ENCODE measurements at regions of chr4 and their contacts with region 1.

Region 1: DNA sequence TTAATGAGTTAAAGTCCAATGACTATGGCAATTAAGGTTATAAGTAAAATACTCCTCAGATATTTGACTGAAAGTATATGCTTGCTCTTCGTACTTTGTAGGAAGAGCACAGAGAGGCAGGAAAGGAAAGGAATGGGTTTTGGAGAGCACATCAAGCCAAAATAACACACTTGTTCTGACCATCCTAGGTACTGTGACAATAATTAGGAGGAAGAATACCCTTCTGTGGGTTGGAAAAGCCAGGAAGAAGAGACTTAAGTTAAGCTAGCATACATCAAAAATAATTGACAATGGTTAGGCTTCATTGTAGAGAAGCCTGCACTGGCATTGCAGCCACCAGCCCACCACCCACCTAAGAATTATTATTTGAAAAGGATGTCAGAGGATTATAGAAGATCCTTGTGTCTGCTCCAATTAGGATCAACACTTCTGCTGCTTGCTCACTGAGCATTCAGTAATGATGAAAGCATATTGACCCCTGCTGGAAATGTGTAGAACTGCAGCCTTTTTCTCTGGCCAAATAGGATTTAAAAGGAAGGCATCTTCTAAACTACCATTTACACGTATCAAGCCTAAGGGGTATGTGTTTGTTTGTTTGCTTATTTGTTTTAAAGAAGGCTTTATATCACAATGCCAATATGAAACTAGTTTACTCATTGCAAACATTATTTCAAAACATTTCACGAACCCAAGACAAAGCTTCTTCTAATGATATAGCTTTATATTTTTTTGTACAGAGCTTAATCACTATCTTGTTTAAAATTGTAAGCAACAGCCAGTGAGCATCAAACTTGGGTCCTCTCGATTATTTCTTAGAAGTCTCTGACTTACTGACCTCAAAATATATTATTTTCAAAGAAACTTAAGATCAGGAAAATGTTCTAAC is 286.2 kb upstream of the TET2 start:
- DNase-seq: peak; percentile 64
- H3K4me3 ChIP-seq: no peak overlapping the region
- H3K27ac ChIP-seq: no peak overlapping the region
- H3K4me1 ChIP-seq: no peaks in the 10 kb centered on the region
- H3K27me3 ChIP-seq: no peaks in the 10 kb centered on the region
- CTCF ChIP-seq: peak; percentile 88 to 96

Region 2: GRCh38 chr4:103996637-103997036 is 863.8 kb before region 1 on chr4:
- CTCF ChIA-PET with region 1: no interaction called
- dilution Hi-C with region 1: no loop called
- in situ Hi-C with region 1: loop called in 1 of 2 experiments (anchors 25 kb)
- intact Hi-C with region 1: loop called (anchors 1 kb)
- DNase-seq: peak; percentile 94
- H3K4me3 ChIP-seq: peak overlapping the region; percentile 19 to 54 (median 24)
- H3K27ac ChIP-seq: peak overlapping the region; percentile 86
- H3K4me1 ChIP-seq: no peaks in the 10 kb centered on the region
- H3K27me3 ChIP-seq: no peaks in the 10 kb centered on the region
- CTCF ChIP-seq: no peak

Region 3: DNA sequence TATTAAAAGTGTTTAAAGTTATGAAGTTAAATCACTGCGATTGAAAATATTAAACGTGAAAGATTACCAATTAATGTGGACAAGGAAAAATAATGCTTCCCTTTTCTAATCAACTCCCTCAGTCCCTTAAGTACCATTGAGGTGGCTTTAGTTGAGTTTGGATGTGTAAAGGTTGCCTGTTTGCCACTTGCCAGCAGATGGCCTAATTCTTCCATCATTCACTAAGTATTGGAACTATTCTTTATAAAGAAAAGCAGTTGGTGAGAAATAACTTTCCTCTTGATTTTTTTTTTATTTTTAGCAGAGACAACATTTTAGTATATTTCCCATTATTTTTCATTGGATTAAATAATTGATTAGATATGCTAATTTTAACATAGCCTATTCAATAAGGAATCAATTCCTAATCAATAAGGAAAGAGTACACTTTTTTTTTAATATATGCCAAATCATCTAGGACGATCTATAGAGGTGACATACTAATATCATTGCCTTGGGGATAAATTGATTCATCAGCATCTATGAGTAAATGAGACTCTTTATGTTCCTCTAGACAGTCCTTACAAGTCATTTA is 844.7 kb before region 1 on chr4:
- CTCF ChIA-PET with region 1: no interaction called
- dilution Hi-C with region 1: no loop called
- in situ Hi-C with region 1: no loop called
- intact Hi-C with region 1: loop called (anchors 2 kb)
- DNase-seq: no peak
- H3K4me3 ChIP-seq: no peak overlapping the region
- H3K27ac ChIP-seq: no peak overlapping the region
- H3K4me1 ChIP-seq: no peaks in the 10 kb centered on the region
- H3K27me3 ChIP-seq: no peaks in the 10 kb centered on the region
- CTCF ChIP-seq: peak; percentile 26 to 51

Region 4: DNA sequence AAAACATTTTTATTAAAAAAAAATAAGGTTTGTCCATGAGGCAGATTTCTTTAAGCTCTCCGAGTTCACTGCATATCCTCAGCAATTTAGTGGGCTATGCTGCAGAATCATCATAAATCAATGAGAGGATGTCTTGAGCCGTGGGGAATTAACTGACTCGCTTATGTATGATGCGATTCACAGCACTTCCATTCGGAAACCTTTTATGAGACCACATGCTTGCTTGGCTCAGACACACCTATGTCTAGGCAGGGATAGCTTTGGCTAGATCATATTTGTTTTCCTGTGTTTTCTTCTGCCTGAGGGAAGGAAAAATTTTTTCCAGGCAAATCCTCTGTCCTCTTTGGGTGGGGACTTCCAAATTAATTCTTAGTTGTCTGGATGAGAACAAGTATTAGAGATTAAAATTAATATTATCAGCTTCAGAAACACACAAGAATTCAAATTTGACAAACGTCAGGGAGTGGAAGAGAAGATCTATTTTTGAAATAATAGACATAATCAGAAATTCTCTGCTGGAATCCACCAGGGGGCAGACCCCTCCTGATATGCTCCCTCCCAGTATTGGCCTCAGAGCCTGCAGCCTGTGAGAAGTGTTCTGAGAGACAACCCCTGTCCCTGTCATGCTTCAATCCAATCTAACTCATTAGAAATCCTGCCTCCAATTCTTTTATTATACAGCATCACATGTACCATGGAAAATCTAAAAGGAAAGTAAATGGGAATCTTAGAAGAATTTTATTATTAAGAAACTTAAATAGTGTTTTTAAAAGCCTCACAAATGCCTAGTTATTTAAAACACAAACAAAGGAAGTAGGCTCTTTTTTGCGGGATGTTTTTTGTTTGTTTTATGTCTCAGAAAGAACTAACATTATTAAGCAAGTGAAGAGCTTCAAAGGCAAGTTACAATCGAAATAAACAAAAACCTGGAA is 795.6 kb before region 1 on chr4:
- CTCF ChIA-PET with region 1: no interaction called
- dilution Hi-C with region 1: no loop called
- in situ Hi-C with region 1: loop called in 1 of 2 experiments (anchors 25 kb)
- intact Hi-C with region 1: loop called (anchors 2 kb)
- DNase-seq: peak; percentile 20
- H3K4me3 ChIP-seq: no peak overlapping the region
- H3K27ac ChIP-seq: no peak overlapping the region
- H3K4me1 ChIP-seq: no peaks in the 10 kb centered on the region
- H3K27me3 ChIP-seq: no peaks in the 10 kb centered on the region
- CTCF ChIP-seq: peak; percentile 43 to 53

Region 5: GRCh38 chr4:104693599-104694201 is 166.8 kb before region 1 on chr4:
- CTCF ChIA-PET with region 1: no interaction called
- dilution Hi-C with region 1: no loop called
- in situ Hi-C with region 1: no loop called
- intact Hi-C with region 1: loop called (anchors 1 kb)
- DNase-seq: peak; percentile 21
- H3K4me3 ChIP-seq: no peak overlapping the region
- H3K27ac ChIP-seq: no peak overlapping the region
- H3K4me1 ChIP-seq: no peaks in the 10 kb centered on the region
- H3K27me3 ChIP-seq: no peaks in the 10 kb centered on the region
- CTCF ChIP-seq: peak; percentile 52 to 69

Measured in mammary epithelial cell (primary cell).